ENCODE measurements at regions of chrX and their contacts with region 1.

Region 1: DNA sequence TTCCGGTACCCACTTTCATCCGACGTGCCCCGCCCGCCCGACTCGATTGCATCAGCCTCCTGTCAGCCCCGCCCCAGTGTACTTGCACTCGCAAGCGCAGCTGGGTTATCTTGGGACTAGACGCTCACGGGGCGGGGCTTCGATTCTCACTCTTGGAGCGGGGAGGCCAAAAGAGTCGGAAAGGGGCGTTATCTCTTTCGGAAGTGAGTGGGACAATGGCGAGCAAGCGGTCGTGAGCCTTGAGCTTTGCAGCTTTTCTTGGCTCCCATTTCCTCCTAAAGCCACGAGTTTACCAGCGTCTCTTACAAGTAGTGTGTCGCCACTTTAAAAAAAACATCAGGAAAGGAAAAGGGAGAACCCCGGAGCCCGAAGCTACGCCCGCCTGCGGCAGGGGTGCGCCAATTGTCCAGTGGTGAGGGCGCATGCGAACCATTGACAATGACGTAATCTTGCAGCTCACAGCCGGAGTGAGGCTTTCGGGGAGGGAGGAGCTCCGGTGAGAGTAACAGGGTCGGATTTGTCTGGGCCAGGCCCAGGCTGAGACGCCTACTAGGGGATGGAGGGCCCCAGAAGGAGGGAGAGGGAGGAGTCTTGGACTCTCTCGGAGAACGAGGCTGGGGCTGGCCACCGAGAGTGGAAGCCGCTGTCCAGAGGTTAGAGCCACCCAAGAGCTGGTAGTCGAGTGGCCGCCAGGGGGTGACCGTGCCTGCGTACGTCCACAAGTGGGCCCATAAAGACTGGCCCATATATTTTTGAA is 109.5 kb downstream of the GNL3L start:
- DNase-seq: peak; percentile 89
- H3K4me3 Mint-ChIP-seq: peak overlapping the region; percentile 93
- H3K27ac Mint-ChIP-seq: peak overlapping the region; percentile 99
- H3K4me1 Mint-ChIP-seq: peaks cover 8% of the 10 kb centered on the region
- H3K27me3 Mint-ChIP-seq: no peaks in the 10 kb centered on the region

Region 2: DNA sequence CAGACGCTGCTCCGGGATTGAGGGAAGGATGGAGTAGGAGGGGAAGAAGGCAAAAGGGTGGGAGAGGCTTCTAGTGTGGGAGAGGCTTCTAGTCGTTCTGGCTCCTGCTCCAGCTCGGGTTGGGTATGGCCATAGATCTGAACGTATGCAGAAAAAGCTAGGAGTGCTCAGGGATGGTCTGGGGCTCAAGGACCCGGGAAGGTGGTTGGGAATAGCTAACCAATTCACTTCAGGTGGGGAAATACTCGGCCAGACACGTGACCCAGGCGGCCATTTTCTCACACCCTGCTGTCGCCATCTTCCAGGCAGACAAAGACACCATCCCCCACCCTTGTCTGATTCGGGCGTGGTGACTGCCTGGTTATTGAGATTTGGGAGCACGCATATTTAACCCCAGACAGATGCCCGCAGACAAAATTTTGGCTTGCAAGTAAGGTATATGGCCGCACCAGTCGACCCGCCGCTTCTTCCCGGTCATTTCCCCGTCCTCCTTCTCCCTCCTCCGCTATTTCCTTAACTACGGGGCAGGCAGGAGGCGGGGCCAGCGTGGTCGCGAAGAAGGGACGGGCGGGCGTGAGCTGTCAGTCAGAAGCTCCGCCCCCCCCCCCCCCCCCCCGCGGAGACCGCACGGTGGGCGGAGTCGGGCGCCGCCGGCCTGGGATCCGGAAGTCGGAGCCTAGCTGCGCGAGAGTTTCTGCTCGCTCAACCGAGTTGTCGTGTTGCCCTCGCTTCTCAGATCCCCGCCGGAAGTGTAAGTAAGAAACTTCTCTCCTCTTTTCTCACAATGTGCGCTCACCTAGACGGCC is 109.8 kb before region 1 on chrX and contains the start of gene GNL3L:
- intact Hi-C with region 1: loop called (anchors 1 kb)
- DNase-seq: peak; percentile 74
- H3K4me3 Mint-ChIP-seq: peak within 1 kb of the TSS; percentile 91
- H3K27ac Mint-ChIP-seq: peak within 1 kb of the TSS; percentile 95
- H3K4me1 Mint-ChIP-seq: peaks cover 24% of the 10 kb centered on the region
- H3K27me3 Mint-ChIP-seq: no peaks in the 10 kb centered on the region
- total RNA-seq, gene GNL3L: 63.6 and 64.5 TPM in 2 replicates

Region 3: DNA sequence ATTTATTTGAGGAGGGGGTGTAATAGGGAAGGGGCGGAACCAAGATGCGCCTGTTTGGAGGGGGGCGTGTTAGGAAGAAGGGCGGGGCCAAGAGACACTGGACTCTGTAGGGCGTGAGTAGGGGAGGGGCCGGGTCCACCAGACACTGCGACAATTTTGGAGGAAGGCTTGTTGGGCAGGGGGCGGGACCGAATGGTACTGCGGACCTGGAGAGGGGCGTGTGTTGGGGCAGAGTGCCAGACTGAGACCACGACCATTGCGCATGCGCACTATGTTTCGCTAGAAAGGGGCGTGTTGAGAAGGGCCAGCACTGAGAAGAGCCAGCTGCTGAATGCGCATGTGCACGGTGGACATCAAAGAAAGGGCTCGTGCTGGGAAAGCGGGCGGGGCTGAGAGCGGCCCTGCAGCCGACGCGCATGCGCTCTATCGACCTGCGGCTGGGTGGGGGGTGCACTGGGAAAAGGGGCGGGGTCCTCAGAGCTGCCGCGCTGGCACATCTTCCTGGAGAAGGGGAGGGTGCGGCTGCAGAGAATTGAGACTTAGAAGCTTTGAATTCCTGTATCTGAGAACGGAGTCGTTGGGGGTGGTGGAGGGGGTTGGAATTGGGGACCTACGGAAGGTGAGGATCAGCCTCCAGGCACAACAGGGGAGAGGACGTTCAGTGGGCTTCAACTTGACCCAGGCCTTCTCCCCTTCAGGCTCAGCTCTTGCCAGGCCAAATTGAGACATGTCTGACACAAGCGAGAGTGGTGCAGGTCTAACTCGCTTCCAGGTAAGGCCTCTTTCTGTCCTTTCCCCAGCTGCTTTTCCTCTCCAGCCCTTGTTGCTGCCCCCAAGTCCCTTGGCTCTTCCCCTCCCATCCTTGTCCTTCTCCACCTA is 169.3 kb after region 1 on chrX:
- intact Hi-C with region 1: loop called (anchors 1 kb)
- DNase-seq: peak; percentile 88
- H3K4me3 Mint-ChIP-seq: peak overlapping the region; percentile 89
- H3K27ac Mint-ChIP-seq: peak overlapping the region; percentile 84
- H3K4me1 Mint-ChIP-seq: peaks cover 8% of the 10 kb centered on the region
- H3K27me3 Mint-ChIP-seq: peaks cover 14% of the 10 kb centered on the region

Region 4: DNA sequence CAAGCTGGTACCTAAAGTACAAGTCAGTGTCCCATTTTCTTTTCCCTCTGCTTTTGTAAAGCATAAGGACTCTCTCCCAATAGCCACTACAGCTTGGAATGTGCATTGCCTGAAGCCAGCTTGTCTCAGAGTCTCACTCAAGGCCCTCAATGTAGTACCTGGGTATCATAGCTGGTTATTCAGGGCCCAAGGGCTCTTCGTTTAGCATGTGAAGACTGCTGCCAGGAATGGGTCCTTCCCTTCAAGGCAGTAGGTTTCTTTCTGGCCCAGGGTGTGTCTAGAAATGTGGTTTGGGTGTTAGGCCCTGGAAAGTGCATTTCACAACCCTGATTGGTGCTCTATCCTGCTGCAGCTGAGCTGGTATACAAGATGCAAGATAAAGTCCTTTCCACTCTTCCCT is 199.8 kb after region 1 on chrX:
- intact Hi-C with region 1: no loop called
- DNase-seq: no peak
- H3K4me3 Mint-ChIP-seq: no peak overlapping the region
- H3K27ac Mint-ChIP-seq: no peak overlapping the region
- H3K4me1 Mint-ChIP-seq: no peaks in the 10 kb centered on the region
- H3K27me3 Mint-ChIP-seq: peaks cover 8% of the 10 kb centered on the region

Region 5: DNA sequence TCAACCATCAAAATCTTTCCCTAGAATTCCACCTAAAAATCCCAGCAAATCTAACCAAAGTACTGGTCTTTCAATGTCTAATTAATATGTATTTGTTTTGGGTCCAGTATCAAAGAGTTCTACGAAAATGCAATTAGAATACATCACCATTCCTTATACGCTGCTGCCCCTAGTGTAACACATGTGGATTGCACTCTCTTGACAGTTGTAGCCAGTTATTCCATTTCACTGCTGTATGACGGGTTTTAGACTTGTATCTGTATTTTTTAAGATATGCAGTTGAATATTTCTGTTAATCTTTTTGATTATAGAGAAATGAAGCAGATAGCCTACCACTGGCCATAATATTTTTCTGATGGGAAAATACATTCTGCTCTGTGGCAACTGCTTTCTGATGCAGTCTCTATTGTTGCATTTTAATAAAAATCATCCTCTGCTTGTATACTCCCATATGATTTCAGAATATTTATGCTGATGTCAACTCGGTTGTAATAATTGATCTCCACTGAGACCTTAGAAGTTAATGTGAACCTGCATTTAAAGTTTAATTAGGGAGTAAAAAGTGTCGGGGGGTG is 418.2 kb after region 1 on chrX:
- intact Hi-C with region 1: loop called (anchors 1 kb)
- DNase-seq: no peak
- H3K4me3 Mint-ChIP-seq: peak overlapping the region; percentile 42
- H3K27ac Mint-ChIP-seq: no peak overlapping the region
- H3K4me1 Mint-ChIP-seq: peaks cover 11% of the 10 kb centered on the region
- H3K27me3 Mint-ChIP-seq: peaks cover 2% of the 10 kb centered on the region

Measured in activated T-helper 2 cell treated with anti-CD3 and anti-CD28 coated beads, Interferon-gamma antibody, Interleukin-2, Interleukin-4, amounts not matched to agents 10 μg/mL and 5 μg/mL and 100 μg/mL, durations not matched to agents 14 hours and 24 hours and 36 hours (primary cell).